ENCODE measurements at regions of chr14 and their contacts with region 1.

Region 1: GRCh38 chr14:73058224-73058921 is at the start of gene RBM25:
- DNase-seq: peak; percentile 89 to 98 (median 94)
- ATAC-seq: peak; percentile 95
- H3K4me3 ChIP-seq: peak within 1 kb of the TSS; percentile 78 to 99
- H3K4me3 Mint-ChIP-seq: no peak within 1 kb of the TSS
- H3K27ac ChIP-seq: peak within 1 kb of the TSS; percentile 81 to 94
- H3K27ac Mint-ChIP-seq: no peak within 1 kb of the TSS
- H3K4me1 ChIP-seq: peaks cover 44% of the 10 kb centered on the region
- H3K4me1 Mint-ChIP-seq: peaks cover 40% of the 10 kb centered on the region
- H3K27me3 ChIP-seq: no peaks in the 10 kb centered on the region
- H3K27me3 Mint-ChIP-seq: no peaks in the 10 kb centered on the region
- CTCF ChIP-seq: no peak
- total RNA-seq, gene RBM25: 166 to 178 TPM

Region 2: DNA sequence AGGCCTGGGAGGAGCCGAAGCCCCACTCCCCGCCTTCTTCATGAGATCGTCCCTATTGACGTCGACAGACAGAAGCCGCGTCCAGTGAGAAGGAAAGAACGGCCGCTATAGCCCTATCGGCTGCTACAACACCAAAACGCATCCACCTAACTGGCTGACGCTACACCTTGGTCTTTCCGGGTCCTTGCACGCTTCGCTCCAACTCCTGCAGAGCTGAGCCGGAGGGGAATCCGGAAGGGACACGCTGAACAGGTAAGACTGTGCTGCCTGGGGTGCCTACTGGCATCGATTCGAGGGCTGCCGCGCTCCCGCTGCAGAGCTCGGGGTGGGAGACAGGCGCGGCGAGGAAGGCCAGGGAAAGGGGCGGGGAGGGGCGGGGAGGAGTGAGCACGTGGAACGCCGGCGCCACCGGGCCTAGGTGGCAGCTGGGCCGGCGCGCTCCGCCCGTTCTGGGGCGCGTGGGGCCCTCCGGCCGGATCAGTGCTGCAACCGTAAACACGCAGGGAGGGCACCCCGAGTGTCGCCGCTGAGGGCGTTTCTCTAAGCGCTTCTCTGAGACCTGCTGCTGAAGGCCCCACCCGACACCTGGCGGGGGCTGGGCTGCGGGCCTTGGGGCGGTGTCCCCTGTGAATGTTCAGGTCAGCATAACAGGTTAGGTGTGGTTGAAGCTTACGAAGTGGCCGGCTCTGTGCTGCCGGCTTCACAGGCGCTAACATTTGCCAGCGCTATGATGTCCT is 131.9 kb before region 1 on chr14 and contains the start of gene DCAF4:
- CTCF ChIA-PET with region 1: no interaction called
- POLR2A ChIA-PET with region 1: interaction called, 6 read pairs
- intact Hi-C with region 1: loop called (anchors 1 kb)
- DNase-seq: peak; percentile 89 to 97 (median 93)
- ATAC-seq: peak; percentile 93
- H3K4me3 ChIP-seq: peak within 1 kb of the TSS; percentile 79 to 87
- H3K4me3 Mint-ChIP-seq: peak within 1 kb of the TSS; percentile 94
- H3K27ac ChIP-seq: peak within 1 kb of the TSS; percentile 67 to 76
- H3K27ac Mint-ChIP-seq: peak within 1 kb of the TSS; percentile 92
- H3K4me1 ChIP-seq: peaks cover 13% of the 10 kb centered on the region
- H3K4me1 Mint-ChIP-seq: peaks cover 15% of the 10 kb centered on the region
- H3K27me3 ChIP-seq: no peaks in the 10 kb centered on the region
- H3K27me3 Mint-ChIP-seq: peaks cover 2% of the 10 kb centered on the region
- CTCF ChIP-seq: no peak
- total RNA-seq, gene DCAF4: 21.9 to 26.6 TPM

Region 3: DNA sequence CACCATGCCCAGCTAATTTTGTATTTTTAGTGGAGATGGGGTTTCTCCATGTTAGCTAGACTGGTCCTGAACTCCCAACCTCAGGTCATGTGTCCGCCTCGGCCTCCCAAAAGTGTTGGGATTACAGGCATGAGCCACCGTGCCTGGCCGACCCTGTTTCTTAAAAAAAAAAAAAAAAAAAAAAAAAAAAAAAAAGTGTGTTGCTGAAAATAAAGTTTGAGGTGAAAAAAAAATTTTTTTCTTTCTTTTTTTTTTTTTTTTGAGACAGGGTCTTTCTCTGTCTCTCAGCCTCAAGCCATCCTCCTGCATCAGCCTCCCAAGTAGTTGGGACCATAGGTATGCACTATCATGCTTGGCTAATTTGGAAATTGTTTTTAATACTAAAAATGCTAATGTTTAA is 11.2 kb after region 1 on chr14:
- CTCF ChIA-PET with region 1: interaction called, 3 read pairs
- POLR2A ChIA-PET with region 1: interaction called, 12 read pairs
- intact Hi-C with region 1: no loop called
- DNase-seq: no peak
- ATAC-seq: no peak
- H3K4me3 ChIP-seq: no peak overlapping the region
- H3K4me3 Mint-ChIP-seq: no peak overlapping the region
- H3K27ac ChIP-seq: no peak overlapping the region
- H3K27ac Mint-ChIP-seq: no peak overlapping the region
- H3K4me1 ChIP-seq: peaks cover 13% of the 10 kb centered on the region
- H3K4me1 Mint-ChIP-seq: peaks cover 54% of the 10 kb centered on the region
- H3K27me3 ChIP-seq: no peaks in the 10 kb centered on the region
- H3K27me3 Mint-ChIP-seq: no peaks in the 10 kb centered on the region
- CTCF ChIP-seq: no peak

Region 4: GRCh38 chr14:73458151-73458976 is 400.0 kb after region 1 on chr14 and contains the start of gene NUMB:
- CTCF ChIA-PET with region 1: no interaction called
- POLR2A ChIA-PET with region 1: interaction called, 8 read pairs
- intact Hi-C with region 1: loop called in 1 of 2 experiments (anchors 1 kb)
- DNase-seq: peak; percentile 90 to 99 (median 95)
- ATAC-seq: peak; percentile 96
- H3K4me3 ChIP-seq: peak within 1 kb of the TSS; percentile 67 to 98
- H3K4me3 Mint-ChIP-seq: peak within 1 kb of the TSS; percentile 100
- H3K27ac ChIP-seq: peak within 1 kb of the TSS; percentile 49 to 64
- H3K27ac Mint-ChIP-seq: peak within 1 kb of the TSS; percentile 97
- H3K4me1 ChIP-seq: peaks cover 27% of the 10 kb centered on the region
- H3K4me1 Mint-ChIP-seq: peaks cover 41% of the 10 kb centered on the region
- H3K27me3 ChIP-seq: no peaks in the 10 kb centered on the region
- H3K27me3 Mint-ChIP-seq: no peaks in the 10 kb centered on the region
- CTCF ChIP-seq: no peak
- total RNA-seq, gene NUMB: 21.8 to 22.0 TPM

Region 5: DNA sequence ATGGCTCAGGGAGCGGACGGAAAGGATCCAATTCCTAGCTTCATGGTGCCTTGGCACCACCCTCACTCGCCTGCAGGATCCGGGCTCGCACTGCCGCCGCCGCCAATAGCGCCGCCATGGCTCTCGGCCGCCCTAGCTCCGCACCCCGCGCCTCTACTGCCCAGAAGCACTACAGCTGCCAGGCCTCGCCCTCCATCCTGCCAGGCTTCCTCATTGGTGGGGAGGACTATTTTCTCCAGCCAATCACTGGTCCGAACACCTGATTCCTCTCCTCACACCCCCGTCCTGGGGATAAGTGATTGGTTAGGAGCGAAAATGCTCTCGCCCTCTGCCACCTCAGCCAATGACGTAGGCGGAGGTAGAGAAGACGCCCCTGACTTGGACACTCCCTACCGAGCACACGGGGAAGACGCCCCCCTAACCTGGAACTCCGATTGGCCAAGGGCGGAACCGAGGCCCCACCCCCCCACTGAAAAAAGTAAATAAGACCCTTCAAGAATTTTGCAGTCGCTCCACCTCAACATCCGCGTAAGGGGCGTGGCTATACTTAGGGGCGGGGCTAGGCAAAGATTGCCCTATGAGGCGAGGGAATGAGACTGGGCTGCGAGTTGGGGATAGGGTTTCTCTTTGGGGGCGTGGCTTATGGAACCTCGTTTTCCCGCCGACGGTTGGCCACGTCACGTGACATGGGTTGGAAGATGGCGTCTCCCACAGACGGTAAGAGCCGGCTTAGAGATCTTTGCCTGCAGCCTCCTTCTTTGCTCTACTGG is 1026.1 kb after region 1 on chr14 and contains the starts of genes ALDH6A1 and LIN52:
- CTCF ChIA-PET with region 1: no interaction called
- POLR2A ChIA-PET with region 1: no interaction called
- intact Hi-C with region 1: loop called in 1 of 2 experiments (anchors 10 kb)
- DNase-seq: peak; percentile 100
- ATAC-seq: peak; percentile 85
- H3K4me3 ChIP-seq: peak within 1 kb of the TSS; percentile 80 to 90
- H3K4me3 Mint-ChIP-seq: peak within 1 kb of the TSS; percentile 98
- H3K27ac ChIP-seq: peak within 1 kb of the TSS; percentile 70 to 73
- H3K27ac Mint-ChIP-seq: peak within 1 kb of the TSS; percentile 96
- H3K4me1 ChIP-seq: peaks cover 19% of the 10 kb centered on the region
- H3K4me1 Mint-ChIP-seq: peaks cover 33% of the 10 kb centered on the region
- H3K27me3 ChIP-seq: no peaks in the 10 kb centered on the region
- H3K27me3 Mint-ChIP-seq: no peaks in the 10 kb centered on the region
- CTCF ChIP-seq: no peak
- total RNA-seq, gene ALDH6A1: 3.8 to 4.0 TPM
- total RNA-seq, gene LIN52: 6.1 to 6.8 TPM